Left lung (tissue), 14 donors: ENCODE measurements at regions of chr17 and their contacts with region 1.

Region 1: DNA sequence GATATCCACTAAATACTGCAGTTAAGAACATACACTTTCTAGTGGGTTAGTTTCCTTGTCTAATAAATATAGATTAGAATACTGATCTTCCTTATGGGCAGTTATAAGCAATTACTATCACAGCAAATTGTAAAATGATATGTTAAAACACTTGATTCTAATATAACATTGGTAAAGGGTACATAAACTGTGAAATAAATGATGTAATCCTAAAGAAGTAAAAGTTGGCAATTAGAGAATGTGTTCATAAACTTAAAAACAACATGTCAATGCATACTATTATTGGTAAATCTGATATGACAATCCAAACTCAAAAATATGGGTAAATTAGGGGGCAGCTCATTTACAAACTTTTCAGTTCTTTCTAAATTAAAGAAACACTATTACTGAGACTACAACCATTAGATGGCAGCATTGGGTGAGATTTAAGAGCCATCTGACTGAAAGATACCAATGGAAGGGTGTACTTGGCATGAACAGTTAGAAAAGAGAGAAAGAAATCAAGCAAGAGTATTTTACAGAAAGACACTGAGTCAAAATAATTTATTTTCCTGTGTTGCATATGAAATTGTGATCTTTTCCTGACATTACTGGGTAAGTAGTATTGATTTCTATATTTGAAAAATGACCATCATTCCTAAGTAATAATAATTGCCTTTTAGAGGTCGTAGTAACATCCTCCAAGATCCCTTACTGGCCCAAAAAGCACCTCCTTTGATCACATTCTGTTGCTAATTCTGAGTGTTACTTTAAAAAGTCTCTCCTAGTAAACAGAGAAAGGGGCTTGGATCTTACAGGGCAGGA is 119.6 kb downstream of the SPAG9 start:
- DNase-seq: peak in 2 of 4 donors; percentile 51 to 78
- ATAC-seq: peak; percentile 81
- H3K4me3 ChIP-seq: no peak overlapping the region
- H3K27ac ChIP-seq: no peak overlapping the region
- H3K4me1 ChIP-seq: no peaks in the 10 kb centered on the region
- H3K27me3 ChIP-seq: no peaks in the 10 kb centered on the region
- CTCF ChIP-seq: peak; percentile 27 to 37

Region 2: DNA sequence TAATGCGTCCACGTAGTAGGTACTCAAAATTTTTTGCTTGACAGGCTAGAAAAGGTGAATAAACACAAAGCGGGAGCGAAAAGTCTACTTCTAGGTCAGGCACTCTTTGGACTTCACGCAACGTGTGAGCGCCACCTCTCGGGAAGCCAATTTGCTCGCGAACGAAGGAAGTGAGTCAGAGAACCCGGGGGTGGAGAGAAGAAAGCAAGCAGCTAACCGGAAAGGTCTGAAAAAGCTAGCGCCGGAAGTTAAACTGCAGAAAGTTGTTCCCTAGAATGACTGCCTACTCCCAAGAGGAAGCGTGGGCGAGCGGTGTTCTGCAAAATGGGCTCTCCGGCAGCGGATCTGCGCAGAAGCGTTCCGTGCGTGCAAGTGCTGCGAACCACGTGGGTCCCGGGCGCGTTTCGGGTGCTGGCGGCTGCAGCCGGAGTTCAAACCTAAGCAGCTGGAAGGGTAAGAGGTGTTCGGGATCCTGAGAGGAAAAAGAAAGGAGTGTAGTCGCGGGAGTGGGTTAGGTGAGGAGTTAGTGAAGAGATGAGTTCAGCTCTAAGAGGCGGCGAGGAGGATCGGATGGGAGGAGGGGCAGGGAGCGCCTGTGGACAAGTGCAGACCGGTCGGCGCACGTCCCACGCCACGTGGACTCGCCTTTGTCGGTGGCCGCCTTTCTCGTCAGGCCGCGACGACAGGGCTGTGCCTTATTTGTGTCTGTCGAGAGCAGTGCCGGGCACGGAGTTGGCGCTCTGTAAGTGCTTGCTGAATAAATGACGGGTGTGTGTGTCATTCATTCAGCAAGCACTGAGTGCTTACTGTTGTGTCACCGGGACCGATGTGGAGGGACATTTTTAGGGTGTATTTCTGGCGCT is 152.4 kb after region 1 on chr17 and contains the start of gene NME1:
- intact Hi-C with region 1: loop called in 1 of 2 experiments (anchors 5 kb)
- DNase-seq: peak; percentile 95 to 99 (median 97)
- ATAC-seq: peak; percentile 96
- H3K4me3 ChIP-seq: peak within 1 kb of the TSS; percentile 65 to 67
- H3K27ac ChIP-seq: peak within 1 kb of the TSS; percentile 90 to 91
- H3K4me1 ChIP-seq: peaks cover 8 to 26% of the 10 kb centered on the region in 2 donors
- H3K27me3 ChIP-seq: no peaks in the 10 kb centered on the region
- CTCF ChIP-seq: peak; percentile 46 to 74
- polyA plus RNA-seq, gene NME1: 47.7 to 67.8 (median 54.6) TPM